WTC11 (cell line): ENCODE measurements at regions of chr1 and their contacts with region 1.

Region 1: DNA sequence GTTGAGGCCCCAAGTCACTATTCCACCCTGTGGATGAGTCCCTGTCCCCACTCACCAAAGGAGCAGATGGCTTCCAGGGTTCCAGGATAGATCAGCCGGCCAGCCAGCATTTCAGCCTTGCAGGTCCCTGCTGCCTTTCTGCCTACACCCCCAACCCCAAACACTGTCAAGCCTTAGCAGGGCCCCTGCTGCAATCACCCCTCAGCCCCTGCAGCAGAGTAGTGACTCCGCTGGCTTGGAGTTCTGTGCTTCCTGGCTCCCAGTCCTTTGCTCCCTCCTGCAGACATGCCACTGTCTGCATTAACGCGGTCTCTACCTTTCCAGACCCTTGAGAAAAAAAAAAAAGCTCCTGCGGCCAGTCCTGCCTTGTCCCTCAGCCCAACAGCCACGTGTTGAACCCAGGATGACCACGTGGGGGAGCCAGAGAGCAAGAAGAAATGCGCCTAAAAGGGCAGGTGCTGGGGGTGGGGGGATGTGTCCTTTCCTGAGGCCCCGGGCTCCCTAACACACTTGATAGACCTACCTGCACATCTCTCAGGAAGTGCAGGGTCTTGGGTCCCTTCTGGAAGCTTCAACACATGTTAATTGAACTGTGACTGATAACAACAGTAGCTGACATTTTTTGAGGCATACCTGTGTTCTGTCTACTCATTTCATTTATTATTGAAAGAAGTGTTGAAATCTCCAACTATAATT is 37.4 kb downstream of the RASSF5 start:
- DNase-seq: peak; percentile 96
- ATAC-seq: peak; percentile 96
- H3K4me3 Mint-ChIP-seq: no peak overlapping the region; the same call in 1 of the 2 replicates
- H3K27ac Mint-ChIP-seq: no peak overlapping the region
- H3K4me1 Mint-ChIP-seq: peaks cover 8% of the 10 kb centered on the region
- H3K27me3 Mint-ChIP-seq: no peaks in the 10 kb centered on the region
- CTCF ChIP-seq: peak; percentile 78

Region 2: GRCh38 chr1:206415942-206416341 is 128.8 kb before region 1 on chr1:
- CTCF ChIA-PET with region 1: no interaction called
- POLR2A ChIA-PET with region 1: no interaction called
- DNase-seq: no peak
- ATAC-seq: no peak
- H3K4me3 Mint-ChIP-seq: no peak overlapping the region
- H3K27ac Mint-ChIP-seq: no peak overlapping the region
- H3K4me1 Mint-ChIP-seq: no peaks in the 10 kb centered on the region; the same call in 1 of the 2 replicates
- H3K27me3 Mint-ChIP-seq: no peaks in the 10 kb centered on the region
- CTCF ChIP-seq: no peak

Region 3: GRCh38 chr1:206427291-206427690 is 117.4 kb before region 1 on chr1:
- CTCF ChIA-PET with region 1: no interaction called
- POLR2A ChIA-PET with region 1: no interaction called
- DNase-seq: no peak
- ATAC-seq: no peak
- H3K4me3 Mint-ChIP-seq: no peak overlapping the region
- H3K27ac Mint-ChIP-seq: no peak overlapping the region
- H3K4me1 Mint-ChIP-seq: no peaks in the 10 kb centered on the region
- H3K27me3 Mint-ChIP-seq: no peaks in the 10 kb centered on the region
- CTCF ChIP-seq: no peak

Region 4: DNA sequence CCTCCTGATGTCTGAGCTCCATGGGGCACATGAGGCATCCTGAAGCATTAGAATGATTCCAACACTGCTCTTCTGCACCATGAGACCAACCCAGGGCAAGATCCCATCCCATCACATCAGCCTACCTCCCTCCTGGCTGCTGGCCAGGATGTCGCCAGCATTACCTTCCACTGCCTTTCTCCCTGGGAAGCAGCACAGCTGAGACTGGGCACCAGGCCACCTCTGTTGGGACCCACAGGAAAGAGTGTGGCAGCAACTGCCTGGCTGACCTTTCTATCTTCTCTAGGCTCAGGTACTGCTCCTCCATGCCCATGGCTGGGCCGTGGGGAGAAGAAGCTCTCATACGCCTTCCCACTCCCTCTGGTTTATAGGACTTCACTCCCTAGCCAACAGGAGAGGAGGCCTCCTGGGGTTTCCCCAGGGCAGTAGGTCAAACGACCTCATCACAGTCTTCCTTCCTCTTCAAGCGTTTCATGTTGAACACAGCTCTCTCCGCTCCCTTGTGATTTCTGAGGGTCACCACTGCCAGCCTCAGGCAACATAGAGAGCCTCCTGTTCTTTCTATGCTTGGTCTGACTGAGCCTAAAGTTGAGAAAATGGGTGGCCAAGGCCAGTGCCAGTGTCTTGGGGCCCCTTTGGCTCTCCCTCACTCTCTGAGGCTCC is 48.4 kb before region 1 on chr1:
- CTCF ChIA-PET with region 1: interaction called, 14 read pairs
- POLR2A ChIA-PET with region 1: no interaction called
- DNase-seq: no peak
- ATAC-seq: no peak
- H3K4me3 Mint-ChIP-seq: no peak overlapping the region
- H3K27ac Mint-ChIP-seq: no peak overlapping the region
- H3K4me1 Mint-ChIP-seq: peaks cover 7% of the 10 kb centered on the region; the same call in 1 of the 2 replicates
- H3K27me3 Mint-ChIP-seq: no peaks in the 10 kb centered on the region
- CTCF ChIP-seq: no peak

Region 5: GRCh38 chr1:206521143-206521542 is 23.6 kb before region 1 on chr1:
- CTCF ChIA-PET with region 1: interaction called, 13 read pairs
- POLR2A ChIA-PET with region 1: no interaction called
- DNase-seq: no peak
- ATAC-seq: no peak
- H3K4me3 Mint-ChIP-seq: no peak overlapping the region
- H3K27ac Mint-ChIP-seq: no peak overlapping the region
- H3K4me1 Mint-ChIP-seq: 0 out of 2 replicates have a peak, but pooled peaks cover 3% of the 10 kb centered on the region
- H3K27me3 Mint-ChIP-seq: no peaks in the 10 kb centered on the region
- CTCF ChIP-seq: no peak

Region 6: GRCh38 chr1:206556750-206557635 is 12.3 kb after region 1 on chr1:
- CTCF ChIA-PET with region 1: interaction called, 49 read pairs
- POLR2A ChIA-PET with region 1: no interaction called
- DNase-seq: peak; percentile 73
- ATAC-seq: peak; percentile 83
- H3K4me3 Mint-ChIP-seq: peak overlapping the region; percentile 70
- H3K27ac Mint-ChIP-seq: no peak overlapping the region
- H3K4me1 Mint-ChIP-seq: peaks cover 35% of the 10 kb centered on the region
- H3K27me3 Mint-ChIP-seq: peaks cover 36% of the 10 kb centered on the region
- CTCF ChIP-seq: no peak

Region 7: DNA sequence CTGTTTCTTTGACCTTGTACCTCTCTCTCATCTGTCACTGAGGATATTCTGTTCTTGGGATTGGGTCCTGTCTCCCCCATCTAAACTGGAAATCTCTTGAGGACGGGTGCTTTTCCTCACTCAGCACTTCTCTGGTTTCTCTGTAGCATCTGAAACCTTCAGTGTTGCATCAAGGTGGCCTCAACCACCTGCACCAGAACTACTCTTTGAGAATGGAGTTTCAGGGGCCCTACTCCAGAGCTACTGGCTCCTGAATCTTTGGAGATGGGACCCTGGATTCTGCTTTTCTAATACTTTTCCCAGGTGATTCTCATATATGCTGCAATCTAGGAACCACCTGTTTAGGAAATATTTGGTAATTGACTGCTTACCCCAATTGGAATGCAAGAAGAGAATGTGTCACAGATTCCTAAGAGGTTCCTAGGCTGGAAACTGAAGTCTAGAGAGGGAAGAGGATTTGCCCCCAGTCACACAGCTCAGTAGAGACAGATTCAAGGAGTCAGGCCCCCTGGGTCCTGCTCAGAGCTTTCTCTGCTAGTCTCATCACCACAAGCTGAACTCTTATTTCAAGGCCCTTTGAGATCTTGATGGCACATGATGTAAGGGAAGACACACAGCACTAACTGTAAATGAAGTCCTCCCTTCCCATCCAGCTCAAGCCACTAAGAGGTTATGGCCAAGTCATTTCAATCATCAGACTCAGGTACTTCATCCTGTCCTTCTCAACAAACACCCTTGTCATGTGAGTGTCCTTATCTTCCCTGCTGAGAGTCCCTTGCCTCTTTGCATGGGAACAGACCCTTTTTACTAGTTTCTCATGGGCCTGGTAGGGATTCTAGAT is 18.9 kb after region 1 on chr1:
- CTCF ChIA-PET with region 1: interaction called, 16 read pairs
- POLR2A ChIA-PET with region 1: no interaction called
- DNase-seq: no peak
- ATAC-seq: no peak
- H3K4me3 Mint-ChIP-seq: no peak overlapping the region
- H3K27ac Mint-ChIP-seq: no peak overlapping the region
- H3K4me1 Mint-ChIP-seq: peaks cover 19% of the 10 kb centered on the region
- H3K27me3 Mint-ChIP-seq: peaks cover 5% of the 10 kb centered on the region
- CTCF ChIP-seq: no peak

Region 8: DNA sequence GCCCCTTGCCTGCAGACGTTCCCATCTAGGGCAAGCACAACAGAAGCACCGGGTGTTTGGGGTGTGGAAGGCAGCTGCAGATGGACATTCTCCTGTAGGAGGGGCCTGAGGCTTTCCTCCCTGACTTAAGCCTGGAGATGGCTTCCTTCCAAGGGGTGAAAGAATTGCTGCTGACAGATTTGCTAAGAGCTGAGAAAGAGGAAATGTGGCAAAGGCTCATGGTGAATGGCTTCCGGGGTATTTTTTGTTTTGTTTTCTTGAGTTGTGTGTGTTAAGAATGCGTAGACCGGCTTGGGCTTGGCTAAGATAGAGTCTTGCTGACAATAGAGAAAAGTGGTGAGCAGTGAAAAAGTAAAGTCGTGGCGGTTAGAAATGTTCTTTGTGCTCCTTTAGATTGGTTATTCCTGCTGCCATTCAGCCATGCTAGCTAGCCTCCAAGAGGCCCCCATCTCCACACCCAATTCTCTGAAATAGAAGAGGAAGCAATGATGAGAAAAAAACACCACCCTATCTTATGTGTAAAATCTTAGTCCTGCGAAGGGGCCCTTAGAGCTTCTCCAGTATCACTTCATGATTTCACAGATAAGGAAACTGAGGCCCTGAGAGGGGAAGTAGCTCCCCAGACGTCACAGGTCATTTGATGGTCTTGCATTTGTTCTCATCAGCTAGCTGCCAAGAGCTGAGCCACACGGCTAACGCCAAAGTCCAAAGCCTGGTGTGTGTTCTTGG is 30.6 kb after region 1 on chr1:
- CTCF ChIA-PET with region 1: interaction called, 16 read pairs
- POLR2A ChIA-PET with region 1: no interaction called
- DNase-seq: no peak
- ATAC-seq: no peak; the same call in 1 of the 2 replicates
- H3K4me3 Mint-ChIP-seq: no peak overlapping the region
- H3K27ac Mint-ChIP-seq: peak overlapping the region; percentile 28; the same call in 1 of the 2 replicates
- H3K4me1 Mint-ChIP-seq: peaks cover 6% of the 10 kb centered on the region; the same call in 1 of the 2 replicates
- H3K27me3 Mint-ChIP-seq: no peaks in the 10 kb centered on the region
- CTCF ChIP-seq: no peak

Region 9: DNA sequence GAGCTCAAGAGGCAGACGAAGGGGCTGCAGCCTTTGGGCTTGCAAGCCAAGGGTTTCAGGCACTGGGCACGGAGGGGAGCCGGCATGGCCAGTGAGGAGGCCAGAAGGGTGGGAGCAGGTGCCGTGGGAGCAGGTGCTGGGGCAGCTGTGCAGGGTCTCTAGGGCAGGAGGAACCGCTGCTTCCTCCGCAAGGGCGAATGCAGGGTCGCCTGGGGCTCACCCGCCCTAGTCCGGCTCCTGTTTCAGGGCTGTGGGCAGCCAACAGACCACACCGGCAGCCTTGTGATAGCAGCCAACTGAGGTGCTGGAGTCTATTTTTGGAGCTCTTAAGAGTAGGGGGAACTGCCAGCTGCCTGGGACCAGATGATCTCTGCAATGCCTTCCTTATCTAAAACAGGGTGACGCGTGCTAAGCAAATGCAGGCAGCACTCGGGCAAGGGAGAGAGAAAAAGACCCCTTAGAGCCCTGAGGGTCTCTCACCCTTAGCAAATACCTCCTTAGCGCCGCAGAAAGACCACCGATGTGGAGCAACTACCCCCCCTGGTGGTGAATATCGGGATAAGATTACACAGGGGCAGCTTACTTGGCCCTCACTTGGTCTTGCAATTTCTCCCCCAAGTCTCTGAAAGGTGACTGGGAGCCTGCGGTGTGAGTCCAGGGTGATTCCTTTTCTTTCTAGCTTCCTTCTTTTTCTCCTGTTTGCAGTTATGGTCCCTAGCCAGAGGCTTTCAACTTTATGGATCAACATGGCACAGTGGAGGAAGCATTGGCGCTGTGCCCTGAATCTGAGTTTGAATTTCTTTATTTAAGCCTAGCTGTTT is 119.3 kb after region 1 on chr1:
- CTCF ChIA-PET with region 1: interaction called, 13 read pairs
- POLR2A ChIA-PET with region 1: no interaction called
- DNase-seq: peak; percentile 83
- ATAC-seq: peak; percentile 90
- H3K4me3 Mint-ChIP-seq: peak overlapping the region; percentile 58
- H3K27ac Mint-ChIP-seq: no peak overlapping the region
- H3K4me1 Mint-ChIP-seq: peaks cover 9% of the 10 kb centered on the region; the same call in 1 of the 2 replicates
- H3K27me3 Mint-ChIP-seq: peaks cover 26% of the 10 kb centered on the region
- CTCF ChIP-seq: peak; percentile 86